Common myeloid progenitor, CD34-positive (primary cell): ENCODE measurements at regions of chr9 and their contacts with region 1.

Region 1: GRCh38 chr9:114434878-114435311 is 47.1 kb upstream of the AKNA start:
- DNase-seq: peak; percentile 61 to 69 (median 62)
- H3K4me3 ChIP-seq: no peak overlapping the region
- H3K27ac ChIP-seq: no peak overlapping the region
- H3K4me1 ChIP-seq: peaks cover 0 to 11% (median 3%) of the 10 kb centered on the region in 4 experiments
- H3K27me3 ChIP-seq: no peaks in the 10 kb centered on the region

Region 2: GRCh38 chr9:114452219-114453165 is 17.6 kb after region 1 on chr9:
- CTCF ChIA-PET with region 1: interaction called, 40 read pairs
- POLR2A ChIA-PET with region 1: no interaction called
- DNase-seq: peak; percentile 23 to 89 (median 79)
- H3K4me3 ChIP-seq: no peak overlapping the region
- H3K27ac ChIP-seq: peak overlapping the region in 1 of 2 experiments; percentile 43
- H3K4me1 ChIP-seq: peaks cover 8 to 26% (median 26%) of the 10 kb centered on the region in 4 experiments
- H3K27me3 ChIP-seq: no peaks in the 10 kb centered on the region

Region 3: GRCh38 chr9:114518599-114519022 is 83.7 kb after region 1 on chr9:
- CTCF ChIA-PET with region 1: interaction called, 11 read pairs
- POLR2A ChIA-PET with region 1: no interaction called
- DNase-seq: peak in 1 of 3 donors; percentile 35
- H3K4me3 ChIP-seq: no peak overlapping the region
- H3K27ac ChIP-seq: no peak overlapping the region
- H3K4me1 ChIP-seq: peaks cover under 1 to 5% (median 4%) of the 10 kb centered on the region in 4 experiments
- H3K27me3 ChIP-seq: peaks cover 0 to 15% (median 0%) of the 10 kb centered on the region in 5 experiments